ENCODE measurements at regions of chr11 and their contacts with region 1.

Region 1: DNA sequence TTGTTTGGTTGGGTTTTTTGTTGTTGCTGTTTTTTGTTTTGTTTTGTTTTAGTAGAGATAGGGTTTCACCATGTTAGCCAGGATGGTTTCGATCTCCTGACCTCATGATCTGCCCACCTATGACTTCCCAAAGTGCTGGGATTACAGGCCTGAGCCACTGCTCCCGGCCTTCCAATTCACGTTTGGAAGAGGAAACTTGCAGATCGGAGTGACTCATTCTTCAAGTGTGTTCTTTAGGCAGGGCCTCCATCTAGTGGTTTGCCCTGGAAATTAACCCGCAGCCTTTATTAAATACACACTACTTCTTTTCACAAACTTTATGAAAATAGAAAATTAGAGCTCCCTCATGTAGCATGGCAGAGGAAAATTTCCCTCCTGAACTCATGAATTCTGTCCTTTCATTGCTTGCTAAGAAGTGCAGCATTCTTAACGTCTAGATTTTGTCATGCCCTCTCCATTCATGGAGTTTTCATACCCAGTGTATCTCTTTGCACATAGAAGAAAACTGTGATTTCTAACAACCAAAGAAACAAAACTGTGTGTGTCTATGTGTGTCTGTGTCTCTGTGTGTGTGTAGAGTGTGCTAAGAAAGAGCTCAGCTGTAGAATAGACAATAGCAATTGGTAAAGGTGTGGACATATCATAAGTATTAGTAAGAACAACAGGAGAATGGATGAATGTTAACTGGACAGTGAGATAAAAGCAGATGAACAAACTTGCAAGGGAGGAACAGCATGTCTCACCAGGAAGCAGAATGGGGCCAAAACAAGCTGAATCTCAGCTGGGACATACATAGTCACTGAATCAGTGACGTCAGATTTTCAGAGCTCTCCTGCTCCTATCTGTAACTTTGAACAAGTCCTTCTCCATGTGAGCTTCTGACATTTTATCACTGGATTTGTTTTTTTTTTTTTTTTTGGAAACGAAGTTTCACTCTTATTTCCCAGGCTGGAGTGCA is 118.4 kb downstream of the BBOX1 start:
- DNase-seq: peak; percentile 81
- ATAC-seq: peak; percentile 93
- H3K4me3 ChIP-seq: no peak overlapping the region
- H3K27ac ChIP-seq: no peak overlapping the region
- H3K4me1 ChIP-seq: no peaks in the 10 kb centered on the region
- H3K27me3 ChIP-seq: no peaks in the 10 kb centered on the region
- CTCF ChIP-seq: peak; percentile 94
- POLR2A ChIP-seq: no peak
- RAD21 ChIP-seq: peak; percentile 96

Region 2: DNA sequence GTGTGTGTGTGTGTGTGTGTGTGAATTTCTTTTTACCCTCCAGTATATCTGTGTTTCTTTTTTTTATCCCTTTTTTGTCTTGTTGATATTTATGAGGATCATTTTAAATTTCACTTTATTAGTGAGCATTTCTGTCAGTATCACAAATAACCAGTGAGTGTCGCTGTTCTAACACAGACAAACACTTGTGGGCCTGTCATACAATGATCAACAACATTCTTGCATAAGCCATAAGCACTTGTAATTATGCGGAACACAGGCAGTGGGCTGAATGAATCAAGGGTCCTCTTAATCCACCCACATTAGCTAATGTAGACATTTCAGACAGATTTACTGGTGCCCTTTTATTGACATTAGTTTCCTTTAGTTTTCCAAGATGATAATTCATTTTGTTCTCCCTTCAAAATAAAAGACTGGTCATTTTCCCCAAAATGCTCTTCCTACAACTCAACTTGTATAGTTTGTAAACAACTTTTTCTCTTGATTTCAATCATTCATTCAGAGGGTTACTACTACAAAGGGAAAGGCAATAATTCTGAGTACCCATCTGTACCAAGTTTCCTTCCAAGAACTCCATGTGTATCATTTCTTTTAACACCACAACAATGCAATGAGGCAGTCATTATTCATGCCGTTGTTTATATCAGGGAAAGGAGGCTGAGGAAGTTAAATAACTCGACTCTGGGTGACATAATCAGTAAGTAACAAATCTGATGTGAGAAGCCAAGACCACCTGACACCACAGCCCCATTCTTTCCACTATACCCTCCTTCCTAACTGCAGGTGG is 861.6 kb before region 1 on chr11:
- CTCF ChIA-PET with region 1: interaction called, 5 read pairs
- POLR2A ChIA-PET with region 1: no interaction called
- dilution Hi-C with region 1: no loop called
- in situ Hi-C with region 1: loop called (anchors 10 kb)
- intact Hi-C with region 1: loop called (anchors 2 kb)
- DNase-seq: peak; percentile 75
- ATAC-seq: peak; percentile 90
- H3K4me3 ChIP-seq: no peak overlapping the region
- H3K27ac ChIP-seq: no peak overlapping the region
- H3K4me1 ChIP-seq: no peaks in the 10 kb centered on the region
- H3K27me3 ChIP-seq: peaks cover 9% of the 10 kb centered on the region
- CTCF ChIP-seq: peak; percentile 77
- POLR2A ChIP-seq: no peak
- RAD21 ChIP-seq: peak; percentile 63

Region 3: DNA sequence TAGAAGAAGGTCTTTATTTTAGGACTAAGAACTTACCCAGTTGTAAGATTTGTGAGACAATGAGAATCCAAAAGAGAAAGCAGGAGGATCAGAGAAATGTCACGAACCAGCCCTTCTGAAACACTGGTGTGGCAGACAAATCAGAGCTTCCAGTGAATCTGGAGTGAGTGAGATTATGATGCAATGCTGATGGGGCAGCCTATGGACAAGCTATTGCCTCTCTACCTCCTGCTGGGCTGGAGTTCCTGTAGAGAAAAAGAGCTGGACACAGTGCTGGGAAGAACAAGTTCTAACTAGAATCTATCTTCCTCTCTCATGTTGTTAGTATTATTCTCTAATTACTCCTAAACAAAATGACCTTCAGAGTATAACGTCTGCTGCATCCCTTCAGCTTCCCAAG is 839.1 kb before region 1 on chr11:
- CTCF ChIA-PET with region 1: no interaction called
- POLR2A ChIA-PET with region 1: no interaction called
- dilution Hi-C with region 1: no loop called
- in situ Hi-C with region 1: loop called (anchors 10 kb)
- intact Hi-C with region 1: no loop called
- DNase-seq: no peak
- ATAC-seq: peak; percentile 54
- H3K4me3 ChIP-seq: no peak overlapping the region
- H3K27ac ChIP-seq: no peak overlapping the region
- H3K4me1 ChIP-seq: no peaks in the 10 kb centered on the region
- H3K27me3 ChIP-seq: no peaks in the 10 kb centered on the region
- CTCF ChIP-seq: no peak
- POLR2A ChIP-seq: no peak
- RAD21 ChIP-seq: no peak

Region 4: DNA sequence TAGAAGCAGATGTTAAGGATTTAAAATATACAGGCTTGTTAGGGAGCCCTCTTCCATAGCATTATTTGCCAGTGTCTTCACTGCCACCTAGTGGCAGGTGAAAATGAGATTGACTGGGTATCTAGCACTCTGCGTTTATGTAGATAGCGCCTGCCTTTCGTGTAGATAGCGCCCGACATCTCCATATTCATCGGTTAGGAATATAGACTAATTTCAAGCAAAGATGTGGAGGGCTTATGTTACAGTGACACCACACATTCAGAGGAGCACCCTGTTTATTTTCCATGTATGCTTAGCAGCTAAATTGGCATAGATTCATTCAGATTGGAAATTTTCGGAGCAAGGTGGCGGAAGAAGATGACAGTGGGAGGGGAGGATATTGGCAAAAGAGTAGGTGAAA is 509.1 kb before region 1 on chr11:
- CTCF ChIA-PET with region 1: no interaction called
- POLR2A ChIA-PET with region 1: no interaction called
- dilution Hi-C with region 1: no loop called
- in situ Hi-C with region 1: no loop called
- intact Hi-C with region 1: loop called (anchors 10 kb)
- DNase-seq: peak; percentile 53
- ATAC-seq: peak; percentile 89
- H3K4me3 ChIP-seq: no peak overlapping the region
- H3K27ac ChIP-seq: no peak overlapping the region
- H3K4me1 ChIP-seq: no peaks in the 10 kb centered on the region
- H3K27me3 ChIP-seq: no peaks in the 10 kb centered on the region
- CTCF ChIP-seq: peak; percentile 67
- POLR2A ChIP-seq: no peak
- RAD21 ChIP-seq: peak; percentile 60

Region 5: GRCh38 chr11:26947379-26947844 is 211.6 kb before region 1 on chr11:
- CTCF ChIA-PET with region 1: interaction called, 5 read pairs
- POLR2A ChIA-PET with region 1: no interaction called
- dilution Hi-C with region 1: no loop called
- in situ Hi-C with region 1: no loop called
- intact Hi-C with region 1: loop called (anchors 5 kb)
- DNase-seq: peak; percentile 100
- ATAC-seq: peak; percentile 91
- H3K4me3 ChIP-seq: no peak overlapping the region
- H3K27ac ChIP-seq: no peak overlapping the region
- H3K4me1 ChIP-seq: peaks cover 21% of the 10 kb centered on the region
- H3K27me3 ChIP-seq: no peaks in the 10 kb centered on the region
- CTCF ChIP-seq: no peak
- POLR2A ChIP-seq: no peak
- RAD21 ChIP-seq: peak; percentile 13

Region 6: GRCh38 chr11:26993965-26994457 is 165.0 kb before region 1 on chr11 and contains the start of gene FIBIN:
- CTCF ChIA-PET with region 1: interaction called, 3 read pairs
- POLR2A ChIA-PET with region 1: no interaction called
- dilution Hi-C with region 1: no loop called
- in situ Hi-C with region 1: no loop called
- intact Hi-C with region 1: loop called (anchors 1 kb)
- DNase-seq: peak; percentile 70
- ATAC-seq: peak; percentile 56
- H3K4me3 ChIP-seq: peak within 1 kb of the TSS; percentile 78
- H3K27ac ChIP-seq: peak within 1 kb of the TSS; percentile 95
- H3K4me1 ChIP-seq: peaks cover 11% of the 10 kb centered on the region
- H3K27me3 ChIP-seq: no peaks in the 10 kb centered on the region
- CTCF ChIP-seq: no peak
- POLR2A ChIP-seq: no peak
- RAD21 ChIP-seq: no peak
- total RNA-seq, gene FIBIN: 5.7 and 7.5 TPM in 2 replicates

Region 7: DNA sequence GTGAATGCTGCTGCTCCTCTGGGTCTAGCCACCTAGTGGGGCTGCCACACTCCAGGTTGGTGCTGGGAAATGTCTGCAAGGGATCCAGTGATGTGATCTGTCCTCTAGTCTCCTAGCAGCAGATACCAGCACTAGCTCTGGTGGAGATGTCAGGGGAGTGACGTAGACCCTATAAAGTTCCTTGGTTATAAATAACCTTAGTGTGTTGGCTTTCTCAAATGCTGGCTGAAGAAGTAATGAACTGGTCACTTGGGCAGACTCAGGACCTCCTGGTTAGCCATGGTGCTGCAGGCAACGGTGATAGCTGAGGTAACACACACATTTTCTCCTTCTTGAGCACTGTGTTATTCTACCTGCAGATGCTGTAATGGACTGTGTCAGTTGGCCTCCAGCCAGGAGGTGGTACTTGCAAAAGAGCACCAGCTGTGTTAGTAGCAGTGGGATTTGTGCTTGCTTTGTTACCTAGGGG is 82.8 kb before region 1 on chr11:
- CTCF ChIA-PET with region 1: no interaction called
- POLR2A ChIA-PET with region 1: no interaction called
- dilution Hi-C with region 1: no loop called
- in situ Hi-C with region 1: no loop called
- intact Hi-C with region 1: loop called (anchors 5 kb)
- DNase-seq: no peak
- ATAC-seq: no peak
- H3K4me3 ChIP-seq: no peak overlapping the region
- H3K27ac ChIP-seq: peak overlapping the region; percentile 5; the same call in 1 of the 2 replicates
- H3K4me1 ChIP-seq: peaks cover 11% of the 10 kb centered on the region; the same call in 1 of the 2 replicates
- H3K27me3 ChIP-seq: no peaks in the 10 kb centered on the region
- CTCF ChIP-seq: no peak
- POLR2A ChIP-seq: no peak
- RAD21 ChIP-seq: no peak

Region 8: DNA sequence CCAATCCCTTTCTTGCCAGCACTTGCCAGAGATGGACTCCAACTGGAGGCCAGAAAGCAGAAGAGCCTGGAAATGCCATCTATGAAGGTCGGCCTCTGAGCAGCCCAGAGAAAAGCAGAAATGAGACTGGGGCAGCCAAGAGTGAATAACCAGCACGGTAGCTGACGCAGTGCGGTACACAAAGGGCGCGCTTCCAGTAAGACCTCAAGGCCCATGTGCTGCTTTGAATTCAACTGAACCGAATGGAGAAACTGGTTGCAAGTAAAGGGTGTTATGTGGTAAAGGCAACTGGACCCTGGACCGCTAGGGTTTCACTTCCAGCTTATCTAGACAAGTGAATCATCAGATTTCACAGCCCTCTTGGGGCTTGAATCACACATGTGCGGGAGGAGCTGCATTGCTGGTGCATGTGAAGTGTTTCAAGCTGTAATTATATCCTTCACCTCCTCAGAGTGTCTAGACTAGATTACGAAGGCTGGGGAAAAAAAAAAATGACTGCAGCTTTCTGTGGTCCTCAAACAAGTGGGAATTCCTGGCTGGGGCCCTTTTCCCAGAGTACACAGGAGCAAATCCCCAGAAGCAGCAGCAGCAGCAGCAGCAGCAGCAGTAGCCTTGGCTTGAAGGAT is 75.2 kb after region 1 on chr11:
- CTCF ChIA-PET with region 1: no interaction called
- POLR2A ChIA-PET with region 1: no interaction called
- dilution Hi-C with region 1: no loop called
- in situ Hi-C with region 1: no loop called
- intact Hi-C with region 1: no loop called
- DNase-seq: peak; percentile 94
- ATAC-seq: peak; percentile 97
- H3K4me3 ChIP-seq: no peak overlapping the region
- H3K27ac ChIP-seq: no peak overlapping the region
- H3K4me1 ChIP-seq: peaks cover 9% of the 10 kb centered on the region
- H3K27me3 ChIP-seq: peaks cover 3% of the 10 kb centered on the region; the same call in 1 of the 2 replicates
- CTCF ChIP-seq: peak; percentile 27; the same call in 1 of the 2 replicates
- POLR2A ChIP-seq: no peak
- RAD21 ChIP-seq: peak; percentile 27; the same call in 1 of the 2 replicates

Region 9: DNA sequence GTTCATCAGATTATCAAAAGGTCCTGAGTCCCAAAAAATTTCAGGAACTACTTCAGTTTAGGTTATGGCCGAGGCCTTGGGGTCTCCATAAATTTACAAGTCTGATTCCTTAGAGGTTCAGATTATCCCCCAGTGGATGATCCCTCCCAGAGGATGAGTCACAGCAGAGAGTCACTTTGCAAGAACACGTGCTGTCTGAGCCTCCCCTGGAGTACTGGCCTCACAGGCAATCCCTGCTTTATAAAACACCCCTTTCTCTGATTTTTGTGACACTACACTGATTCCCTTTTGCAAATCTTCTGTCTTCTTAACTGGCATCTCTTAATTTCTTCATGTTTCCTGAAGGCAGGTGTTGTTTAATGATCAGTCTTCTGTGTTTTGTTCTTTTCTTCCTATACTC is 158.8 kb after region 1 on chr11:
- CTCF ChIA-PET with region 1: no interaction called
- POLR2A ChIA-PET with region 1: no interaction called
- dilution Hi-C with region 1: no loop called
- in situ Hi-C with region 1: no loop called
- intact Hi-C with region 1: no loop called
- DNase-seq: peak; percentile 79
- ATAC-seq: peak; percentile 84
- H3K4me3 ChIP-seq: no peak overlapping the region
- H3K27ac ChIP-seq: no peak overlapping the region
- H3K4me1 ChIP-seq: peaks cover 2% of the 10 kb centered on the region; the same call in 1 of the 2 replicates
- H3K27me3 ChIP-seq: no peaks in the 10 kb centered on the region
- CTCF ChIP-seq: no peak
- POLR2A ChIP-seq: no peak
- RAD21 ChIP-seq: no peak

Measured in IMR-90 (cell line).